Activated CD4-positive, alpha-beta T cell treated with anti-CD3 and anti-CD28 coated beads, Interleukin-2, amount 10 ng/mL, durations not matched to agents 24 days and 14 days (primary cell): ENCODE measurements at regions of chr10 and their contacts with region 1.

Region 1: DNA sequence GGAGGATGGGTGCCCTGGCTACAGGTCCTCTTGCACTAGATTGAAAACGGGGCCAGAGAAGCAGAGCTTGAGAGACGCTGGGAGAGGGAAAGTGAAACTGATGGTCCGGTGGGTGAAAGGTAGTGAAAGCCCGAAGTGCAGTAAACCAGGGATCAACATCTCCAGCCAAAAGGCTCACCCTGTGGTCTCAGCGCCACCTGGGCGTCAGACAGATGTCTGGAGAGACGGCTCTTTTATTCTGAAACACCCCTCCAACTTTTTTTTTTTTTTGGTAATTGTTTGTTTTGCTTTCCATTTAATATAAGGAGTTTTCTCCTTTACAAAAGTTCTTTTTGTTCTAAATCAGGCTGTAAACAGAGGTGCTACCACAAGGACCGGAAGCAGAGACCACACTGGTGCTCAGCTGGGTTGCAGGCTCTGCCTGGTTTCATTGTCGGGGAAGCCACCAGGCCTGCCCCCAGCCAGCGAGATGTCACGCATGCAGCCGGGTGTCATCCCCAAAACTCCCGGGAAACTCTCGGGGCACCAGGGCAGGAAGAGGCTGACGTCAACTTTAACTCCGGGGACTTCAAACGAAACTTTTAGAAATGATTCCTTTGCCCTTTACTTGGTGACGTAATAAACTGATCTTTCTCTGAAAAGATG is 11.2 kb downstream of the IL2RA start:
- DNase-seq: peak; percentile 98
- H3K4me3 Mint-ChIP-seq: peak overlapping the region; percentile 81
- H3K27ac Mint-ChIP-seq: peak overlapping the region; percentile 96
- H3K4me1 Mint-ChIP-seq: peaks cover 82% of the 10 kb centered on the region
- H3K27me3 Mint-ChIP-seq: no peaks in the 10 kb centered on the region

Region 2: GRCh38 chr10:5977471-5978229 is 73.3 kb before region 1 on chr10 and contains the start of gene IL15RA:
- intact Hi-C with region 1: loop called (anchors 2 kb)
- DNase-seq: peak; percentile 97
- H3K4me3 Mint-ChIP-seq: peak within 1 kb of the TSS; percentile 97
- H3K27ac Mint-ChIP-seq: peak within 1 kb of the TSS; percentile 95
- H3K4me1 Mint-ChIP-seq: peaks cover 27% of the 10 kb centered on the region
- H3K27me3 Mint-ChIP-seq: peaks cover 4% of the 10 kb centered on the region
- total RNA-seq, gene IL15RA: 24.4 and 25.5 TPM in 2 replicates

Region 3: GRCh38 chr10:6062101-6062771 is 11.3 kb after region 1 on chr10 and contains the start of gene IL2RA:
- intact Hi-C with region 1: loop called (anchors 1 kb)
- DNase-seq: peak; percentile 90
- H3K4me3 Mint-ChIP-seq: peak within 1 kb of the TSS; percentile 91
- H3K27ac Mint-ChIP-seq: peak within 1 kb of the TSS; percentile 96
- H3K4me1 Mint-ChIP-seq: peaks cover 56% of the 10 kb centered on the region
- H3K27me3 Mint-ChIP-seq: peaks cover 2% of the 10 kb centered on the region
- total RNA-seq, gene IL2RA: 965 and 989 TPM in 2 replicates

Region 4: DNA sequence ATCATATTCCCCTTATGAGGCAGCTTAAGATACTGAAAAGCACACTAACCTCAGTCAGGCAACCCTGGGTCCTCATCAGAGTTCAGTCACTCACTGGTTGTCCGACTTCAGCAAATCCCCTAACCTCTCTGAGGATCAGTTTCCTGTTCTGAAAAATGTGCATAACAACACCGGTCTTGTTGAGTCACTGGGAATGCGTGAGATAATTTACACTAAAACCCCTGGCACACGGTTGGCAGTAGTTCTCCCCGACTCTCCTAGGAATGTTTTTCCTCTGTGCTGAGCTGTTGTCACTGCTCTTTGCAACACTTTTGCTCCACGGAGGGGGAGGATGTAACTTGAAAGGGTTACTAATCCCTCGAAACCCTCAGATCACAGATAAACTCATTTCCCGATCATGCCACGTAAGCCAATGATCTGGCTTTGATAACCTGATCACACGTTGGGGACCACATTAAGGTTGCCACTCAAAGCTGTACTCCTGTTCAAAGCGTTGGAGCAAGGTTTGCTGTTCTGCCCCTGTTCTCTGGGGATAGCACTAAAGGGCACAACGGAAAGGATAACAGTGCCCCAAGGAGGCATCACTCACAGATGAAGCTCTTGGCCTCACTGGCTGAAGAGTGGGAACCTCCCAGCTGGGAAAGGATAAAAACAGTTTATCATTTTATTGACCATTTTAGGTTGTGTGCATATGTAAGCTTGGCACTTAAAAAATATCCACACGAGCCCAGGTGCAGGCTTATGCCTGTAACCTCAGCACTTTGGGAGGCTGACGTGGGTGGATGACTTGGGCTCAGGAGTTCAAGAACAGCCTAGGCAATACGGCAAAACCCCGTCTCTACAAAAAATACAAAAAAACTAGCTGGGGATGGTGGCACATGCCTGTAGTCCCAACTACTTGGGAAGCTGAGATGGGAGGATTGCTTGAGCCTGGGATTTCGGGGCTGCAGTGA is 32.9 kb after region 1 on chr10:
- intact Hi-C with region 1: loop called (anchors 1 kb)
- DNase-seq: peak; percentile 90
- H3K4me3 Mint-ChIP-seq: peak overlapping the region; percentile 87
- H3K27ac Mint-ChIP-seq: peak overlapping the region; percentile 97
- H3K4me1 Mint-ChIP-seq: peaks cover 62% of the 10 kb centered on the region
- H3K27me3 Mint-ChIP-seq: peaks cover 2% of the 10 kb centered on the region

Region 5: DNA sequence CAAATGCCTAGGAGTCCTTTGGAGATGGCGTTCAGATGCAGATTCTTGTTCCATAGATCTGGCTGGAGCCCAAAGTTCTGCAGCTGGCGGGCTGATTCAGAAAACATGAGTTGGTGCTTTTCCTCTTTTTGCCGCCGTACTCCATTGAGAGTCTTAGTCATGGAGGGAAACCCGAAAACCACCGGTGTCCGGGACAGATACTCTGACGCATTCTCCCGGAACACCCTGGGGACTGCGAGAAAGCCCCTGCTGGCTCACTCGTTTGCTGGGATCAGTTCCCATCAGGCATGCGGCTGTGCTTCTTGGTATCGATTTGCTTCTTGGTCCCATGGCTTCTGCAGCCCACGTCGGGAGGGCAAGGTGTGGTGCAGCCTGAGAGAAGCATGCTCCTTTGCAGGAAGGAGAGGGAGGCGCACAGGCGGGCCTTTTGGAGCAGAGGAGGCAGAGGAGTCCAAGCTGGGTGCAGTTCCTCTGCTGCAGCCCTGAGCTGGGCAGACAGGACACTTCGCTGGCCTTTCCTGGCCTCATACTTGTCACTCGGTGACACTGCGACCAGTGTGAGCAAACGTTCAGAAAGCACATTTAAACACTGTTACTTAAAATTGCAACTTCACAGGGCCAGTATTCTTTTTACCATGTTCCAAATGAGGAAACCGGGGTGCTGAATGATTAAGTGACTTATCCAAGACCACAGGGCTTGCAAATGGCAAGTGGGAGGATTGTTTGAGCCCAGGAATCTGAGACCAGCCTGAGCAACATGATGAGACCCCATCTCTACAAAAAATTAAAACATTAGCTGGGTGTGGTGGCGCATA is 121.2 kb after region 1 on chr10:
- intact Hi-C with region 1: no loop called
- DNase-seq: peak; percentile 77
- H3K4me3 Mint-ChIP-seq: peak overlapping the region; percentile 74
- H3K27ac Mint-ChIP-seq: peak overlapping the region; percentile 85
- H3K4me1 Mint-ChIP-seq: peaks cover 79% of the 10 kb centered on the region
- H3K27me3 Mint-ChIP-seq: no peaks in the 10 kb centered on the region

Region 6: GRCh38 chr10:6269953-6270867 is 219.3 kb after region 1 on chr10:
- intact Hi-C with region 1: loop called (anchors 2 kb)
- DNase-seq: peak; percentile 92
- H3K4me3 Mint-ChIP-seq: peak overlapping the region; percentile 62
- H3K27ac Mint-ChIP-seq: peak overlapping the region; percentile 94
- H3K4me1 Mint-ChIP-seq: peaks cover 62% of the 10 kb centered on the region
- H3K27me3 Mint-ChIP-seq: no peaks in the 10 kb centered on the region